ENCODE measurements at regions of chr2 and their contacts with region 1.

Region 1: GRCh38 chr2:218406209-218406948 is 6.7 kb downstream of the CTDSP1 start:
- DNase-seq: peak; percentile 75 to 94 (median 85)
- ATAC-seq: peak; percentile 81
- H3K4me3 ChIP-seq: peak overlapping the region; percentile 56
- H3K4me3 Mint-ChIP-seq: peak overlapping the region; percentile 77 to 95 (median 88)
- H3K27ac ChIP-seq: peak overlapping the region; percentile 75
- H3K27ac Mint-ChIP-seq: peak overlapping the region; percentile 83 to 95 (median 91)
- H3K4me1 ChIP-seq: peaks cover 23 to 32% of the 10 kb centered on the region in 2 donors
- H3K4me1 Mint-ChIP-seq: peaks cover 31 to 62% (median 53%) of the 10 kb centered on the region in 7 donors
- H3K27me3 ChIP-seq: no peaks in the 10 kb centered on the region
- H3K27me3 Mint-ChIP-seq: peaks cover 0 to 3% (median 0%) of the 10 kb centered on the region in 5 donors

Region 2: DNA sequence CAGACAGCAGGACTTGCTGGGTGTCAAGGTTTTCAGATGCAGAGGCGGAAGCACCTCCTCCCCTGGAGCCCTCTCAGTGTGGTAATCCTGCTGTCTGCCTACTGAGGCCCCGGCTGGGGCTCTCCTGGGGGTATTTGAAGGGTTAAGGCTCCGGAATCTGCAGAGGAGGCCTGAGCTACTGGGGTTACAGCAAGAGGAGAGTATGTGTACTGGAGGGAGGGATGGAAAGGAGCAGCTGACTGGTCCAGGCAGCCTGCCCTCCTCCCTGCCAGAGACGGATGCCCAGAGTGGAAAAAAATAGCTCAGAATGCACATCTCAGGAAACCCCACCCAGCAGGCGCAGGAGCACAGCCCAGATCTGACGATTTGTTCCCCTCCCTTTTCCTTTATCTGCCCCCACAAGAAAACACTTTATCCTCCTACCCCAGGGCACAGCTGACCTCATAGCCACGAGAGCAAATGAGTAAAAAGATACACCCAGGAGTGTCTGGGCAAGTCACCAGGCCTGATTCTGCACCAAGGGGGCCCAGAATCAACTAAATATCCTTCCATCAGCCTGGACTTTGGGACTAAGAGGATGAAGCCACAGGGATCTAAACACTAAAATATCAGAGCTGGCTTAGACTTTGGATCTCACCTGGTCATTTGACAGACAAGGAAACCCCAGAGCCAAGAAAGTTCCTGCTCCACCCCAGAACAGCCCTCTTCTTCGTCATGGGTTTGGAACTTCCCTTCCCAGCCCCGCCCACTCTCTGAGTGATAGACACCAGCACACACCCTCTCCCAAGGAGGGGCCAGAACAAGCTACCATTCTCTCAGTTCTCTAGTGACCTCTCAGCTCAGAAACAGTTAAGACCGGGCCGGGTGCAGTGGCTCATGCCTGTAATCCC is 119.6 kb before region 1 on chr2:
- CTCF ChIA-PET with region 1: no interaction called
- POLR2A ChIA-PET with region 1: interaction called, 8 read pairs
- intact Hi-C with region 1: loop called in 1 of 2 experiments (anchors 2 kb)
- DNase-seq: peak; percentile 53 to 90 (median 78)
- ATAC-seq: peak; percentile 87
- H3K4me3 ChIP-seq: peak overlapping the region; percentile 66
- H3K4me3 Mint-ChIP-seq: peak overlapping the region; percentile 85 to 97 (median 94)
- H3K27ac ChIP-seq: peak overlapping the region; percentile 93
- H3K27ac Mint-ChIP-seq: peak overlapping the region; percentile 95 to 99 (median 99)
- H3K4me1 ChIP-seq: peaks cover 74 to 77% of the 10 kb centered on the region in 2 donors
- H3K4me1 Mint-ChIP-seq: peaks cover 53 to 87% (median 76%) of the 10 kb centered on the region in 7 donors
- H3K27me3 ChIP-seq: no peaks in the 10 kb centered on the region
- H3K27me3 Mint-ChIP-seq: no peaks in the 10 kb centered on the region

Region 3: DNA sequence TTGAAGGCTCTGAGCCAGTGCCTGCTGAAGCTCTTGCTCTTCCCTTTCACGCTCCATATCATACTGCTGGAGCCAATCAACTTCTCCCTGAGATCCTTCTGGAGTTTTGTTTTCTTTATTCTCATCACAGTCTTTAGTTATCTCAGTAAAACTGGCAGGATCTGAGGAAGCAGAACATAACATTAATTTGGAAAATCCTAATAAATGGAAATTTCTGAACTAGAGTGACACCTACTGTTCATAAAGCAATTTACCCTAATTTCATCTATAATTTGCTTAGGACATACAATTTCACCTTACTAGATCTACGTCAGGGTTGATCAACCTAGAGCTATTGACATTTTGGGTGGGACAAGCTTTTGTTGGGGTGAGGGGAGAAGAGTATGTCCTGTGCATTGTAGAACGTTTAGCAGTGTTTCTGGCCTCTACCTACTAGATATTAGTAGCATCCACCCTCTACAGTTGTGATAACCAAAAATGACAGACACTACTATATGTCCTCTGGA is 59.7 kb after region 1 on chr2:
- CTCF ChIA-PET with region 1: interaction called, 4 read pairs
- POLR2A ChIA-PET with region 1: interaction called, 4 read pairs
- intact Hi-C with region 1: loop called (anchors 1 kb)
- DNase-seq: peak in 3 of 9 donors; percentile 9 to 24 (median 23)
- ATAC-seq: peak; percentile 45
- H3K4me3 ChIP-seq: no peak overlapping the region
- H3K4me3 Mint-ChIP-seq: no peak overlapping the region
- H3K27ac ChIP-seq: no peak overlapping the region
- H3K27ac Mint-ChIP-seq: peak overlapping the region in 2 of 9 donors; percentile 3 to 62
- H3K4me1 ChIP-seq: peaks cover 0 to 4% of the 10 kb centered on the region in 2 donors
- H3K4me1 Mint-ChIP-seq: peaks cover 5 to 10% (median 9%) of the 10 kb centered on the region in 7 donors
- H3K27me3 ChIP-seq: no peaks in the 10 kb centered on the region
- H3K27me3 Mint-ChIP-seq: no peaks in the 10 kb centered on the region

Region 4: DNA sequence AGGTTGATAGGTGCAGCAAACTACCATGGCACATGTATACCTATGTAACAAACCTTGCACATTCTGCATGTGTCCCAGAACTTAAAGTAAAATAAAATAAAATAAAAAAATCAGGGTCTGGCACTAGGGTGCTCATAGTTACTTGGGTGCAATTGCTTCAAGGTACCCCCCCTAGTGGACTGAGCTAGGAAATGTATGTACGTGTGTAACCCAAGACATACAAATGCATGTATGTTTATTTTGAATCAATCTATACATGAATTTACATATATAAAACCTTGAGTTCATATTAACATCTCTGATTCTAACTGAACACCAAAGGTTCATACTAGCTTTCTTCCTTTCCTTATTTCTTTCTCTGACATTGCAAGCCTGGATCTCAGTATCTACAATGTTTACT is 110.2 kb after region 1 on chr2:
- CTCF ChIA-PET with region 1: interaction called, 3 read pairs
- POLR2A ChIA-PET with region 1: interaction called, 5 read pairs
- intact Hi-C with region 1: loop called in 1 of 2 experiments (anchors 1 kb)
- DNase-seq: peak in 7 of 9 donors; percentile 9 to 46 (median 31)
- ATAC-seq: peak; percentile 74
- H3K4me3 ChIP-seq: no peak overlapping the region
- H3K4me3 Mint-ChIP-seq: no peak overlapping the region
- H3K27ac ChIP-seq: no peak overlapping the region
- H3K27ac Mint-ChIP-seq: peak overlapping the region in 1 of 9 donors; percentile 78
- H3K4me1 ChIP-seq: no peaks in the 10 kb centered on the region
- H3K4me1 Mint-ChIP-seq: peaks cover 0 to 42% (median 13%) of the 10 kb centered on the region in 7 donors
- H3K27me3 ChIP-seq: no peaks in the 10 kb centered on the region
- H3K27me3 Mint-ChIP-seq: no peaks in the 10 kb centered on the region

Region 5: GRCh38 chr2:218583983-218584850 is 177.8 kb after region 1 on chr2:
- CTCF ChIA-PET with region 1: no interaction called
- POLR2A ChIA-PET with region 1: no interaction called
- intact Hi-C with region 1: no loop called
- DNase-seq: no peak
- ATAC-seq: no peak
- H3K4me3 ChIP-seq: no peak overlapping the region
- H3K4me3 Mint-ChIP-seq: no peak overlapping the region
- H3K27ac ChIP-seq: no peak overlapping the region
- H3K27ac Mint-ChIP-seq: peak overlapping the region in 1 of 9 donors; percentile 56
- H3K4me1 ChIP-seq: no peaks in the 10 kb centered on the region
- H3K4me1 Mint-ChIP-seq: peaks cover 0 to 27% (median 7%) of the 10 kb centered on the region in 7 donors
- H3K27me3 ChIP-seq: no peaks in the 10 kb centered on the region
- H3K27me3 Mint-ChIP-seq: no peaks in the 10 kb centered on the region

Region 6: GRCh38 chr2:218648088-218648786 is 241.9 kb after region 1 on chr2:
- CTCF ChIA-PET with region 1: no interaction called
- POLR2A ChIA-PET with region 1: no interaction called
- intact Hi-C with region 1: loop called (anchors 1 kb)
- DNase-seq: peak; percentile 15 to 55 (median 46)
- ATAC-seq: peak; percentile 91
- H3K4me3 ChIP-seq: no peak overlapping the region
- H3K4me3 Mint-ChIP-seq: peak overlapping the region in 1 of 10 donors; percentile 7
- H3K27ac ChIP-seq: no peak overlapping the region
- H3K27ac Mint-ChIP-seq: peak overlapping the region in 1 of 9 donors; percentile 35
- H3K4me1 ChIP-seq: peaks cover 0 to 7% of the 10 kb centered on the region in 2 donors
- H3K4me1 Mint-ChIP-seq: peaks cover 0 to 14% (median 12%) of the 10 kb centered on the region in 7 donors
- H3K27me3 ChIP-seq: no peaks in the 10 kb centered on the region
- H3K27me3 Mint-ChIP-seq: no peaks in the 10 kb centered on the region

Region 7: GRCh38 chr2:218691234-218691633 is 284.9 kb after region 1 on chr2:
- CTCF ChIA-PET with region 1: no interaction called
- POLR2A ChIA-PET with region 1: no interaction called
- intact Hi-C with region 1: loop called in 1 of 2 experiments (anchors 1 kb)
- DNase-seq: no peak
- ATAC-seq: no peak
- H3K4me3 ChIP-seq: no peak overlapping the region
- H3K4me3 Mint-ChIP-seq: no peak overlapping the region
- H3K27ac ChIP-seq: no peak overlapping the region
- H3K27ac Mint-ChIP-seq: no peak overlapping the region
- H3K4me1 ChIP-seq: no peaks in the 10 kb centered on the region
- H3K4me1 Mint-ChIP-seq: peaks cover 2 to 5% (median 4%) of the 10 kb centered on the region in 7 donors
- H3K27me3 ChIP-seq: no peaks in the 10 kb centered on the region
- H3K27me3 Mint-ChIP-seq: no peaks in the 10 kb centered on the region

Measured in naive thymus-derived CD4-positive, alpha-beta T cell (primary cell).